ENCODE measurements at regions of chr2 and their contacts with region 1.

Region 1: GRCh38 chr2:27281855-27282559 is at the start of gene TRIM54:
- DNase-seq: no peak
- H3K4me3 ChIP-seq: peak within 1 kb of the TSS; percentile 1 to 43 (median 35); a peak in 7 of 8 replicates
- H3K27ac ChIP-seq: no peak within 1 kb of the TSS
- H3K4me1 ChIP-seq: peaks cover 4 to 18% (median 13%) of the 10 kb centered on the region in 4 experiments
- H3K27me3 ChIP-seq: peaks cover 0 to 4% (median 0%) of the 10 kb centered on the region in 4 experiments; a peak in 1 of 7 replicates
- CTCF ChIP-seq: no peak
- EP300 ChIP-seq: no peak
- POLR2A ChIP-seq: no peak
- RAD21 ChIP-seq: no peak
- total RNA-seq, gene TRIM54: 3.9 and 4.2 TPM in 2 replicates

Region 2: GRCh38 chr2:27102329-27102728 is 179.7 kb before region 1 on chr2:
- CTCF ChIA-PET with region 1: interaction called, 12 read pairs
- POLR2A ChIA-PET with region 1: interaction called, 3 read pairs
- DNase-seq: no peak
- H3K4me3 ChIP-seq: no peak overlapping the region
- H3K27ac ChIP-seq: no peak overlapping the region
- H3K4me1 ChIP-seq: no peaks in the 10 kb centered on the region
- H3K27me3 ChIP-seq: no peaks in the 10 kb centered on the region; a peak in 1 of 7 replicates
- CTCF ChIP-seq: no peak
- EP300 ChIP-seq: no peak
- POLR2A ChIP-seq: no peak
- RAD21 ChIP-seq: peak in 1 of 2 experiments; percentile 29; a peak in 1 of 4 replicates

Region 3: DNA sequence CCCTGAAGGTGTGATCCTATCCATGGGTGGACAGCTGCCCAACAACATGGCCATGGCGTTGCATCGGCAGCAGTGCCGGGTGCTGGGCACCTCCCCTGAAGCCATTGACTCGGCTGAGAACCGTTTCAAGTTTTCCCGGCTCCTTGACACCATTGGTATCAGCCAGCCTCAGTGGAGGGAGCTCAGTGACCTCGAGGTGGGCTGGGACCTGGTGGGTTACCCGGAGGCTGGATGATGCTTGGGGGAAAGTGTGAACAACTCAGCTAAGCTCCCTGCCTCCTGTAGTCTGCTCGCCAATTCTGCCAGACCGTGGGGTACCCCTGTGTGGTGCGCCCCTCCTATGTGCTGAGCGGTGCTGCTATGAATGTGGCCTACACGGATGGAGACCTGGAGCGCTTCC is 48.7 kb before region 1 on chr2:
- CTCF ChIA-PET with region 1: interaction called, 55 read pairs
- POLR2A ChIA-PET with region 1: interaction called, 10 read pairs
- DNase-seq: no peak
- H3K4me3 ChIP-seq: no peak overlapping the region
- H3K27ac ChIP-seq: no peak overlapping the region
- H3K4me1 ChIP-seq: no peaks in the 10 kb centered on the region
- H3K27me3 ChIP-seq: no peaks in the 10 kb centered on the region
- CTCF ChIP-seq: no peak
- EP300 ChIP-seq: no peak
- POLR2A ChIP-seq: no peak
- RAD21 ChIP-seq: no peak

Region 4: GRCh38 chr2:27249891-27250651 is 31.9 kb before region 1 on chr2:
- CTCF ChIA-PET with region 1: interaction called, 180 read pairs
- POLR2A ChIA-PET with region 1: interaction called, 149 read pairs
- DNase-seq: peak; percentile 57 to 93
- H3K4me3 ChIP-seq: peak overlapping the region in 2 of 4 experiments; percentile 30 to 52; a peak in 4 of 8 replicates
- H3K27ac ChIP-seq: no peak overlapping the region
- H3K4me1 ChIP-seq: peaks cover 2 to 11% (median 6%) of the 10 kb centered on the region in 4 experiments
- H3K27me3 ChIP-seq: peaks cover 0 to 6% (median 2%) of the 10 kb centered on the region in 4 experiments; a peak in 5 of 7 replicates
- CTCF ChIP-seq: peak; percentile 86 to 98 (median 93)
- EP300 ChIP-seq: no peak
- POLR2A ChIP-seq: peak in 1 of 2 experiments; percentile 47; a peak in 1 of 3 replicates
- RAD21 ChIP-seq: peak; percentile 95 to 96

Region 5: DNA sequence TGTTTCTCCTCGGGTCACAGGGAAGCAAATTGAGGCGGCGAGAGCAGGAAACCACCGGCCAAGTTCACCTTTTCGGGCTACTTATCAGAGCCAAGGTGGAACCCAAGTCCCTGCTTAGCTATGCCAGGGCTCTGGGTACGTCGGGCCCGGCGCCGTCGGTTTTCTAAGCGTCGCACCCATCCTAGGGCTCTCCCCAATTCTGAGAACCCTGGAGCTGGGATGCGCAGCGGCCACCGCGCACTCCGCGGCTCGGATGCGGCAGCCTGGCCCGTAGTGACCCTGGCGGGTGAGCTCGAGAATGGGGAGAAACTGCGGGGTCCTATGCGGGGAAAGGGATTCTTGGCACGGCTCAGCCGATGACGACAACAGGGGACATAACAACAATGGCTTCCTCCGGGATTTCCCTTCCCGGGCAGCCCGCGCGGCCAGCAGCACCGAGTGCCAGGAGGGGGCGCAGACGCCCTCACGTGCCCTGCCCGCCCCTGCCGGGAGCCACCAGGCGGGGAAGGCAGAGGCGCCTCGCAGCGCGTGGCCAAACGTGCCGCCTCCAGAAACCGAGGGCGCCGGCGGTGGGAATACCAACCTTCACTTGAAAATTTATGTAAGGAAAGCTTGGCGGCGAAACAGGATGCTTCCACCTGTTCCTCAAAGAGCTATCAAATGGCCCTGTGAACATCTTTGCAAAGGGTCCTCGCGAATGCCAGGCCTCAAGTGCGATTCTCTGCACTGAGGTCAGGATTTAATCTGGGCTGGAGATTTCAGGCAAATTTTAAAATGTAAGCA is 17.1 kb before region 1 on chr2:
- CTCF ChIA-PET with region 1: interaction called, 288 read pairs
- POLR2A ChIA-PET with region 1: interaction called, 63 read pairs
- DNase-seq: peak in 1 of 2 experiments; percentile 89
- H3K4me3 ChIP-seq: peak overlapping the region; percentile 57 to 85 (median 62)
- H3K27ac ChIP-seq: no peak overlapping the region
- H3K4me1 ChIP-seq: peaks cover 3 to 19% (median 14%) of the 10 kb centered on the region in 4 experiments
- H3K27me3 ChIP-seq: peaks cover 39 to 69% (median 60%) of the 10 kb centered on the region in 4 experiments
- CTCF ChIP-seq: peak in 2 of 3 experiments; percentile 76 to 88; a peak in 3 of 4 replicates
- EP300 ChIP-seq: no peak
- POLR2A ChIP-seq: peak in 1 of 2 experiments; percentile 63; a peak in 2 of 3 replicates
- RAD21 ChIP-seq: peak; percentile 42 to 63

Region 6: GRCh38 chr2:27313882-27314645 is 32.1 kb after region 1 on chr2:
- CTCF ChIA-PET with region 1: interaction called, 13 read pairs
- POLR2A ChIA-PET with region 1: no interaction called
- DNase-seq: no peak
- H3K4me3 ChIP-seq: no peak overlapping the region
- H3K27ac ChIP-seq: no peak overlapping the region
- H3K4me1 ChIP-seq: peaks cover 0 to 2% (median 0%) of the 10 kb centered on the region in 4 experiments; a peak in 1 of 7 replicates
- H3K27me3 ChIP-seq: no peaks in the 10 kb centered on the region; a peak in 3 of 7 replicates
- CTCF ChIP-seq: no peak
- EP300 ChIP-seq: no peak
- POLR2A ChIP-seq: no peak
- RAD21 ChIP-seq: no peak